ENCODE measurements at regions of chr11 and their contacts with region 1.

Region 1: DNA sequence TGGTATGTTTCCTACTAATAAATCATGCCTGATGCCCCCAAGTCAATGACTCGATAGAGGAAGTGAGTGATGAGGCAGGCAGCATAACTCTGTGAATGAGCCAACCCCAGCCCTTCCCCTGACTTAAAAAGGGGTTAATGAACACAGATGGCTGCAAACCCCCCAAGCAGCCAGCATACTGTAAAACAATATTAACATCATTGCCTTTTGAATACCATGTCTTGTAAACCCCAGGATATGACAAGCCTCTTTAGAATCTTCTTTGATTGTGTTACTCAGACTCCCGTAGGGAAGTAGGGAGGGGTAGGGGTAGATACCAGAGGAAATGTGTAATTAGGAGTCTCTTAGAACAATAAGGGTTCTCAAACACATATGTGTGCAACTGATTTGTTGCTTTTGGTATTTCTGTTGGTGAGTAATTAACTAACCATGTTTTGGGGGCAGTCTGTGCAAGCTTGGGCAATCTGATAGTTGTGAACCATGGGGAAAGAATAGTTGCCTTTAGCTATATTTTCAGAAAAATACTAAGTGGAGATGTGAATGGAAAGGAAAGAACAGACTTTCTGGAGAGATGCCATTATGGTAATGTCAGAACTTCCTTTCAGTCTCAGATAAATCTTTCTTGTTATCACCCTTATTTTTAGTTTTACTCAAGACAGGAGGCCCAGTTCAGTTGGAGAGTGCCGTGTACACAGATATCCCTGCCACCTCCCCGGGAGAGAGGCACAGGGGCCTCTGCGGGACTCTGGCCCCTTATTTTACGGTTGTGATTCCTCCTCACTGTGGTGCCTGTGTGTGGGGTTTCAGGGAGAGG is 701.8 kb downstream of the NTM start:
- DNase-seq: peak; percentile 97
- H3K4me3 ChIP-seq: no peak overlapping the region
- H3K27ac ChIP-seq: peak overlapping the region; percentile 91
- H3K4me1 ChIP-seq: peaks cover 30% of the 10 kb centered on the region
- H3K27me3 ChIP-seq: no peaks in the 10 kb centered on the region
- CTCF ChIP-seq: no peak

Region 2: DNA sequence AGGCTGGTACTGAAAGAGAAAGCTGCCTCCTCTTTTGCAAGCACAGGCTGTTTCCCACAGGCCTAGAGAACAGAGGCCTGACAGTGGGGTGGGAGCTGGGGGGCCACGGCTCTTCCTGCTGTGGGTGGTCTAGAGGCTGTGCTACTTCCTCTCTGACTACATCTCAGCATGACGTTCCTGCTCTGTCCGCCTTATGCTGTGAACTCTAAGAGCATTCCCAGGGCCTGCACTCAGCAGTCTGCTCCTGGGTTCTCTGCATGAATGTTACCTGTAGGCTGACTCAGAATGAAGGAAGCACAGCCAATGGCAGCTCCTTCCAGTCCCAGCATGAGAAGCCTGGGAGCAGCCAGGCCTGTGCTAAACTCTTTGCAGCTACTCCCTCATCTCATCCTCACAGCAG is 167.5 kb before region 1 on chr11:
- CTCF ChIA-PET with region 1: no interaction called
- POLR2A ChIA-PET with region 1: no interaction called
- intact Hi-C with region 1: loop called (anchors 1 kb)
- DNase-seq: peak; percentile 95
- H3K4me3 ChIP-seq: no peak overlapping the region
- H3K27ac ChIP-seq: peak overlapping the region; percentile 70
- H3K4me1 ChIP-seq: peaks cover 90% of the 10 kb centered on the region
- H3K27me3 ChIP-seq: no peaks in the 10 kb centered on the region
- CTCF ChIP-seq: no peak